Heart left ventricle (tissue), 16 donors: ENCODE measurements at regions of chr1 and their contacts with region 1.

Region 1: DNA sequence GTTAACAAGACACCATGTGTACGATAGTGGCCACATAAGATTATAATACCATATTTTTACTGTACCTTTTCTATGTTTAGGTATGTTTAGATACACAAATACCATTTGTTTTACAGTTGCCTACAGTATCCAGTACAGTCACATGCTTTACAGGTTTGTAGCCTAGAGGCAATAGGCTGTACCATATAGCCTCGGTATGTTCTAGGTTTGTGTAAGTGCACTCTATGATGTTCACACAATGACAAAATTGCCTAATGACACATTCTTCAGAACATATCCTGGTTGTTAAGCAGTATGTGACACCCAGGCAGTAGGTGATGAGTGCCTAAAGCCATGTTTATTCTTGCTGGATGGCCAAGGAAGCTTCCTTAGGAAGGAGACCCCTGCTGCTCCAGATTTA is 111.8 kb downstream of the PAPPA2 start:
- DNase-seq: no peak
- ATAC-seq: no peak
- H3K4me3 ChIP-seq: no peak overlapping the region
- H3K27ac ChIP-seq: no peak overlapping the region
- H3K4me1 ChIP-seq: no peaks in the 10 kb centered on the region
- H3K27me3 ChIP-seq: no peaks in the 10 kb centered on the region
- CTCF ChIP-seq: no peak
- POLR2A ChIP-seq: no peak

Region 2: GRCh38 chr1:176522310-176522850 is 52.4 kb before region 1 on chr1:
- intact Hi-C with region 1: no loop called
- DNase-seq: no peak
- ATAC-seq: no peak
- H3K4me3 ChIP-seq: no peak overlapping the region
- H3K27ac ChIP-seq: no peak overlapping the region
- H3K4me1 ChIP-seq: peaks cover 0 to 5% (median 0%) of the 10 kb centered on the region in 12 donors
- H3K27me3 ChIP-seq: peaks cover 0 to 3% (median 0%) of the 10 kb centered on the region in 9 donors
- CTCF ChIP-seq: no peak
- POLR2A ChIP-seq: no peak

Region 3: GRCh38 chr1:176638713-176639526 is 64.2 kb after region 1 on chr1:
- intact Hi-C with region 1: loop called in 1 of 10 experiments (anchors 5 kb)
- DNase-seq: peak in 4 of 5 donors; percentile 19 to 41 (median 34)
- ATAC-seq: peak in 3 of 4 donors; percentile 63 to 71 (median 65)
- H3K4me3 ChIP-seq: no peak overlapping the region
- H3K27ac ChIP-seq: peak overlapping the region in 3 of 12 donors; percentile 26 to 63 (median 61)
- H3K4me1 ChIP-seq: peaks cover 0 to 9% (median 0%) of the 10 kb centered on the region in 12 donors
- H3K27me3 ChIP-seq: no peaks in the 10 kb centered on the region
- CTCF ChIP-seq: no peak
- POLR2A ChIP-seq: no peak

Region 4: DNA sequence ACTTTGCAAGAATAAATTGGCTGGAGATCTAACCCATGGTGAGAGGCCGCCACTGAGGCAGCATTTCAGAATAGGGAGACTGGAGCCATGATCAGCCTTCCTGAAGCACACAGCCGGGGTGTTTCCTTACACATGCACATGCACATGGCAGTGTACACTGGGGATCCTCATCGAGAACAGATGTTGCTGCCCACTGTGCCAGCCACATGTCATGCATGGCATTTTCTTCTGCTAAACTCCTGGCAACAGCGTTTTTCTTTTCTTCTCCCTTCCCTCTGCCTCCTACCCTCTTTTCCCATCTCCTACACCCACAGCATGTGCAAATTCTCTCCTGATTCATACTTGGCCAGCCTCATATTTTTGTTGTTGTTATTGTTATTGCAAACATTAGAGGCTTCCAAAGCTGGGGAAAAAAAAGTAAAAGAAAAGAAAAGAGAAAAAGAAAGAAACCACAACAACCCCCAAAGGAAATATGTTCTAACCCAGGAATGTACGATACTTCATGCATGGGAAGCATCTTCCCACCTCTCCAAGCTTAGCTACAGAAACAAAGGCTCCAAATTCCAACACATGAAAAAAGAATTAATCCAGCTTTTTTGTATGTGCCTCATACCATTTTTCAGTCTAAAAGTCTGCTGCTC is 245.8 kb after region 1 on chr1:
- intact Hi-C with region 1: no loop called
- DNase-seq: no peak
- ATAC-seq: no peak
- H3K4me3 ChIP-seq: no peak overlapping the region
- H3K27ac ChIP-seq: no peak overlapping the region
- H3K4me1 ChIP-seq: no peaks in the 10 kb centered on the region
- H3K27me3 ChIP-seq: no peaks in the 10 kb centered on the region
- CTCF ChIP-seq: no peak
- POLR2A ChIP-seq: no peak